ENCODE measurements at regions of chr9 and their contacts with region 1.

Region 1: GRCh38 chr9:101566904-101567724 is 27.7 kb downstream of the PPP3R2 start:
- DNase-seq: peak; percentile 24
- H3K4me3 ChIP-seq: no peak overlapping the region
- H3K27ac ChIP-seq: no peak overlapping the region
- H3K4me1 ChIP-seq: no peaks in the 10 kb centered on the region
- H3K27me3 ChIP-seq: no peaks in the 10 kb centered on the region
- CTCF ChIP-seq: peak; percentile 46 to 57

Region 2: DNA sequence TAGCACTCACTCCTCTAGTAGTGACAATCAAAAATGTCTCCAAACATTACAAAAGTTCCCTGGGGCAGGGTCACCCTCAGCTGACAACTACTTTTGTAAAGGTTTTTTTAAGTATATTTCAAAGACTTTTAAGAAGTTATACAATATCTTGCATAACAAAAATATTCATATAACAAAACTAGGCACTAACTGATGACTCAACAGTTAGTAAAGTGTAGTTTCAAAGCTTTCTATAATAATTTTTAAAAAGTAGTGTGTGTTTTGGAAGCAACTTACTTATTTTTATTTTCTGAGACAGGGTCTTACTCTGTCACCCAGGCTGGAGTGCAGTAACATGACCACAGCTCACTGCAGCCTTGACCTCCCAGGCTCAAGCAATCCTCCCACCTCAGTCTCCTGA is 267.2 kb before region 1 on chr9:
- CTCF ChIA-PET with region 1: no interaction called
- dilution Hi-C with region 1: no loop called
- in situ Hi-C with region 1: no loop called
- intact Hi-C with region 1: no loop called
- DNase-seq: no peak
- H3K4me3 ChIP-seq: no peak overlapping the region
- H3K27ac ChIP-seq: no peak overlapping the region
- H3K4me1 ChIP-seq: no peaks in the 10 kb centered on the region
- H3K27me3 ChIP-seq: peaks cover 3% of the 10 kb centered on the region
- CTCF ChIP-seq: no peak

Region 3: GRCh38 chr9:101449140-101449721 is 117.9 kb before region 1 on chr9:
- CTCF ChIA-PET with region 1: no interaction called
- dilution Hi-C with region 1: no loop called
- in situ Hi-C with region 1: no loop called
- intact Hi-C with region 1: loop called (anchors 1 kb)
- DNase-seq: peak; percentile 64
- H3K4me3 ChIP-seq: peak overlapping the region; percentile 63 to 68 (median 65)
- H3K27ac ChIP-seq: no peak overlapping the region
- H3K4me1 ChIP-seq: no peaks in the 10 kb centered on the region
- H3K27me3 ChIP-seq: peaks cover 2% of the 10 kb centered on the region
- CTCF ChIP-seq: peak; percentile 44 to 57

Region 4: DNA sequence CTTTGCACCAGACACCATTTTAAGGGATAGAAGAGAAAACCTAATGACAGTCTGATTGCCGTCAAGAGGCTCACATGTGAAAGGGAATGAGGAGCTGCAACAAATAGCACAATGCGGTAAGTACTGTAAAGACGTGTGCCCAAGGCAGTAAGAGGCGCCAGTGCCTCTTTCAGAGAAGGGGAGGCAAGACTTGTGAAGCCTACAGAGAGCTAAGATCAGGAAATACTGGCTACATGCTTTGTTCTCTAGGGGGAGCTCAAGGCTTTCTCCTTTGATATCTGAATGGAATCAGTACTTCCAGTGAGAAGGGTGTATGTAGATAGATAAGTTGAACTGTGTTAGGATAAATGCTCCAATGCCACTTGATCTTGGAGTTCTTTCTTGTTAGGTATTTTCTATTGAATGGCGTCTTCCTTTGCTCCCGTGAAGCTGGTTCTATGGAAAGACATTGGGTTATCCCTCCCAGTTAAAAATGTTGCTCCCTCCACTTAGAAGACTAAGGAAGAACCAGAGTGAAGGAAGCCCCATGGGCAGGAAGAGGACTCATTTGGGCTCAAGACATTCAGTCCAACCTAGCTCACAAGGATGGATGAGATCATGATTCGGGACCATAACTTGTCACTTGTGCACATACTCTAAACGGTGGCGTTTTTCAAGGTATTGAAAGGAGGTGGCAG is 108.0 kb before region 1 on chr9:
- CTCF ChIA-PET with region 1: interaction called, 6 read pairs
- dilution Hi-C with region 1: no loop called
- in situ Hi-C with region 1: no loop called
- intact Hi-C with region 1: loop called (anchors 1 kb)
- DNase-seq: peak; percentile 68
- H3K4me3 ChIP-seq: no peak overlapping the region
- H3K27ac ChIP-seq: no peak overlapping the region
- H3K4me1 ChIP-seq: no peaks in the 10 kb centered on the region
- H3K27me3 ChIP-seq: no peaks in the 10 kb centered on the region
- CTCF ChIP-seq: peak; percentile 70 to 88

Region 5: DNA sequence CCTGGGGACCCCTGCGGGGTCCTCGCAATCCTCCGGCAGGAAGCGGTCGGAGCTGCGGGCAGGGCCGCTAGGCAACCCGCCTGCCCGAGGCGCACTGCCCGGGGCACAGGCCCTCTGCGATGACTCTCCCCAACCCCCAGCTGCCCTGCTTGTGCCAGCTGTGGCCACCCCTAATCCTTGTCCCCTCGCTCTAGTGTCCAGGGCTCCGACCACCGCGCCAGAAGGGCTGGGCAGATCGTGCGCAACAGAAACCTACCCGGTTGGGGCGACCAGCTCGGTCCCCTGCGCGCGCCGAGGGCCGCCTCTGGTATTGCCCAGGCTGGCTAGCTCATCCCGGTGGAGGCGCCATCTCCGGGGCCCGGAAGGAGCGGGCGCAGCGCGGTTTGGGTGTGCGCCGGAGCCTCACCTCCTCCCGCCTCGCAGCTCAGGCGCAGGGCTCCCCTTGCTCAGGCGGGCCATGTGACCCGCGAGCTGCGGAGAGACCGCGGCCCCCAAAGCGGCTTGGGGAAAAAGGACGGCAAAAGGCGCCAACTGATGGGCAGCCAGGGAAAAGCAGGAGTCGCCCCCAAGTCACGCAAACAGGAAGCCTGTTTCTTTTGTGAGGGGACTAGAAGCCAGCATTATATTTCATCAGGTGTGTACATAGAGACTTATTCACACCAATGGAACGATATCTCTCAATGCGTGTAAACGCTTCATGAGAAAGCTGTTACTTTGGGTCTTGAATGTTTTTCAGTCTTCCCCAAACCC is 80.2 kb before region 1 on chr9:
- CTCF ChIA-PET with region 1: no interaction called
- dilution Hi-C with region 1: no loop called
- in situ Hi-C with region 1: no loop called
- intact Hi-C with region 1: no loop called
- DNase-seq: peak; percentile 70
- H3K4me3 ChIP-seq: peak overlapping the region; percentile 26 to 49 (median 48)
- H3K27ac ChIP-seq: no peak overlapping the region
- H3K4me1 ChIP-seq: peaks cover 14% of the 10 kb centered on the region
- H3K27me3 ChIP-seq: peaks cover 3% of the 10 kb centered on the region
- CTCF ChIP-seq: peak in 1 of 2 donors; percentile 11

Measured in mammary epithelial cell (primary cell).